GM18951 (cell line): ENCODE measurements at regions of chr10 and their contacts with region 1.

Region 1: GRCh38 chr10:91251430-91252056 is 31.1 kb downstream of the PCGF5 start:
- POLR2A ChIP-seq: no peak

Region 2: GRCh38 chr10:91006001-91006751 is 245.4 kb before region 1 on chr10:
- in situ Hi-C with region 1: loop called (anchors 10 kb)
- POLR2A ChIP-seq: no peak